AG04449 (cell line): ENCODE measurements at regions of chr15 and their contacts with region 1.

Region 1: DNA sequence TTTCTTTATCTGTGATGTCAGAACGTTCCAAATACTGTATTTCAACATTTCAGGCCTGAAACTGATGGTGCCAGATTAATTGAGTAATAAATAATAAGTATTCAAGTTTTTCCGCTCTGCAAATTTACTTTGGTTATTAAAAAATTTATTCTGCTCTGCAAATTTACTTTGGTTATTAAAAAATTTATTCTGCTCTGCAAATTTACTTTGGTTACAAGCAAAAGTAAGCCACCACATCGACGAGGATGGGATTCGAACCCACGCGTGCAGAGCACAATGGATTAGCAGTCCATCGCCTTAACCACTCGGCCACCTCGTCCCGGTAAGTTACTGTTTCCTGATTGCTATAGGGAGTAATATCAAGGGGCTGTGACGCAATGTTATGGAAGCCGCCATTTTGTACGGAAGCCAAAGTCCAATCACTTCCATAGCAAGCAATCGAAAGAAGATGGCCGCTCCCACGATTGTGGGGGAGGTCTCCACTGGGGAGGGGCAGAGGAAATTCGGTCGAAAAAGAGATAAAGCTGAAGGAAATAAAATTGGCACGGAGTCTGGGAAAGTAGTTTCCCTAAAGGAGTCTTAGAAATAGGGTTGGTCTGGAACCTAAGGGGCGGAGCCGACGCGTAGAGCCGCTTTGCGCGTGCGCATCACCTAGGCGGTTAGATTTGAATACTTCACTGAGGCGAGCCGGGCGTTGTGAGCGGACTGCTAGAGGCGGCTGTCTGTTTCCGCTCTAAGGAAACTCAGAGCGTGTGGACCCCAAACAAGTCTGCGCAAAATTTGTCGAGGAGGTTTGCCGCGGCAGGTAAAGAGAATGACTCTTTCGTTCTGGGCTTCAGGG is at the start of gene KNL1:
- DNase-seq: peak; percentile 60
- H3K4me3 ChIP-seq: peak within 1 kb of the TSS; percentile 87
- CTCF ChIP-seq: no peak

Region 2: DNA sequence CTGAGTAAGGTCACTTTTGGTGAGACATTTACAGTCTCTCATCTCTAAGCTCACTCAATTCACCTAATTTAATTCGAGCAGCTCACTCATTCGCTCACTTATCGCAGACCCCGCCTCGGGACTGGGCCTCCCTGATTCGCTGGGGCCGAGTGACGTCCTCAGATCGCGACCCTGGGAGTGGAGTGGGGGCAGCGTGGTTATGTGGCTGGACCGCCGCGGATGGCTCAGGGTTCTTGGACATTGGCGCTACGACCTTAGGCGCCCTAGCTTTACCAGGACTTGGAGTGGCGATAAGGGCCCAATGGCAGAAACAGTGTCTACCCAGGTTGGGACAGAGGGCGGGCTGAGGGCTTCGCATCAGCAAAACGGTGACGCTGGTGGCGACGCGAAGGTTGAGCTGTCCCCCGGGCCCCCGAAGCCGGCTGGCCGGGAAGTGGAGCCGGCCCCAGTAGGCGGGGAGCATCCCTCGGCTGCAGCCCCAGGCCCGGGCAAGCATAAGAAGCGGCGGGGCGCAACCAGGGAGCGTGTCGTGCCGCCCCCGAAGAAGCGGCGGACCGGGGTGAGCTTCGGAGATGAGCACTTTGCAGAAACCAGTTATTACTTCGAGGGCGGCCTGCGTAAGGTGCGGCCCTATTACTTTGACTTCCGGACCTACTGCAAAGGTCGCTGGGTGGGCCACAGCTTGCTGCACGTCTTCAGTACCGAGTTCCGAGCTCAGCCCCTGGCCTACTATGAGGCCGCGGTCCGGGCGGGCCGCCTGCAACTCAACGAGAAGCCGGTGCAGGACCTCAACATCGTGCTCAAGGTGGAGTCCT is 24.5 kb before region 1 on chr15 and contains the start of gene RPUSD2:
- CTCF ChIA-PET with region 1: interaction called, 11 read pairs
- POLR2A ChIA-PET with region 1: interaction called, 6 read pairs
- DNase-seq: peak; percentile 28
- H3K4me3 ChIP-seq: peak within 1 kb of the TSS; percentile 100
- CTCF ChIP-seq: no peak

Region 3: GRCh38 chr15:40582726-40583246 is 11.0 kb before region 1 on chr15:
- CTCF ChIA-PET with region 1: interaction called, 55 read pairs
- POLR2A ChIA-PET with region 1: no interaction called
- DNase-seq: no peak
- H3K4me3 ChIP-seq: no peak overlapping the region
- CTCF ChIP-seq: no peak